Left colon (tissue), 2 donors: ENCODE measurements at regions of chr19 and their contacts with region 1.

Region 1: DNA sequence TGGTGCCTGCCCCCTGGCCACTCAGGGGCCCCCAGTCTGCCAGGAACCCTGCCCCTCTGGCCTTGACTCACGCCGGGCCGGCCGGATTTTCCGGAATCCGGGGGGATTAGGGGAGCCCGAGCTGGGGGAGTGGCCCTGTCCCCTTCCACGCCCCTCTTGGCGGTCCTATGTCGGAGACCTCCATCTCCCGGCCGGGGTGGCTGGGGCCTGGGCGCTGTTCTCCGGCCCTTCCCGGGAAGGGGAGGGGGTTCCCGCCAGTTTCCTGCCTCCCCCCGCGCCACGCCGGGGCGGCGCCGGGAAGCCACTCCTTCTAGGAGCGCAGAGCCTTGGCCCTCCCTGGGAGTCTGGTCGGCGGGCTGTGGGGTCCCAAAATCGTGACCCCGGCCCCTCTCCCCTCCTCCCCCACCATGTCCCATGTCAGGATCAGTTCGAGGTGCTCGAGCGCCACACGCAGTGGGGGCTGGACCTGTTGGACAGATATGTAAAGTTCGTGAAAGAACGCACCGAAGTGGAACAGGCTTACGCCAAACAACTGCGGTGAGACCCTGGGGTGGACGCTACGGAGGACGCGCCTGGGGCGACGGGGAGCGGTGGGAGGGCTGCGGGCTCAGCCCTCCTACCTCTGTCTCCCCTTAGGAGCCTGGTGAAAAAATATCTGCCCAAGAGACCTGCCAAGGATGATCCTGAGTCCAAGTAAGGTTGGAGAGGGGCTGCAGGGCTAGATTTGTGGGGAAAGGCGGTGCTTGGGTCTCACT is 1.3 kb downstream of the TRIP10 start:
- DNase-seq: peak; percentile 69 to 73
- ATAC-seq: no peak

Region 2: GRCh38 chr19:6685962-6686627 is 54.7 kb before region 1 on chr19:
- intact Hi-C with region 1: no loop called
- DNase-seq: no peak
- ATAC-seq: no peak

Region 3: DNA sequence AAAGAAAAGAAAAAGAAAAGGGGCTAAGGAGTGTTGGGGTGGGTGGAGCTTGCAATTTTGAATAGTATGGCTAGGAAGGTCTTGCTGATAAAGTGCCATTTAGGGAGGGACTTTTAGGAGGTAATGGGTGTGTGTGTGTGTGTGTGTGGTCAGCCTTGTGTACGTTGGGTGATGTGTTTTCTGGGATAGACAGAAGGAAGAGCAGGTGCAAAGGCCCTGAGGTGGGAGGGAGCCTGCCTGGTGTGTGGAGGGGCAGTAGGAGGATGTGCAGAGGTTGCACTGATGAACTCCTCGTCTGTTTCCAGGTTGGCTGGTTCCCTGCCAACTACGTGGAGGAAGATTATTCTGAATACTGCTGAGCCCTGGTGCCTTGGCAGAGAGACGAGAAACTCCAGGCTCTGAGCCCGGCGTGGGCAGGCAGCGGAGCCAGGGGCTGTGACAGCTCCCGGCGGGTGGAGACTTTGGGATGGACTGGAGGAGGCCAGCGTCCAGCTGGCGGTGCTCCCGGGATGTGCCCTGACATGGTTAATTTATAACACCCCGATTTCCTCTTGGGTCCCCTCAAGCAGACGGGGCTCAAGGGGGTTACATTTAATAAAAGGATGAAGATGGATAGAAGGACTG is 116.1 kb after region 1 on chr19:
- intact Hi-C with region 1: loop called in 1 of 2 experiments (anchors 10 kb)
- DNase-seq: no peak
- ATAC-seq: no peak

Region 4: DNA sequence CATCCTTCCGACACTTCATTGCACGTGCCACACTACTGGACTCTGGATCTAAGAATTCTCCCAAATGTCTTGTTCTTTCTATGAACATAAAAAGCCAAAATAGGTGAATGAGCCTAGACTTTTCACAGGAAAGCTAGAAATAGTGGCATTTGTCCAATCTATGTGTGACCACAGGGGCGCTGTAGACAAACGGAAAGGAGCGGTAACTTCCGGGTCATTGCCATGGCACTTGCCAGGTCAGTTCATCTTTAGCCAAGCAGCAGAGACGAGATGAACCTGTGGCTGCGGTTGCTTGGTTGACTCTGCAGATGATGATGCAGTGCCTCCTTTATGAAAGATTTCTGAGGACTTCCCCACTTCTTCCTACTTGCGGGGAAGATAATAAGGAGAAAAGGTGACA is 212.2 kb after region 1 on chr19:
- intact Hi-C with region 1: no loop called
- DNase-seq: no peak
- ATAC-seq: no peak